Ascending aorta (tissue), 2 donors: ENCODE measurements at regions of chr12 and their contacts with region 1.

Region 1: DNA sequence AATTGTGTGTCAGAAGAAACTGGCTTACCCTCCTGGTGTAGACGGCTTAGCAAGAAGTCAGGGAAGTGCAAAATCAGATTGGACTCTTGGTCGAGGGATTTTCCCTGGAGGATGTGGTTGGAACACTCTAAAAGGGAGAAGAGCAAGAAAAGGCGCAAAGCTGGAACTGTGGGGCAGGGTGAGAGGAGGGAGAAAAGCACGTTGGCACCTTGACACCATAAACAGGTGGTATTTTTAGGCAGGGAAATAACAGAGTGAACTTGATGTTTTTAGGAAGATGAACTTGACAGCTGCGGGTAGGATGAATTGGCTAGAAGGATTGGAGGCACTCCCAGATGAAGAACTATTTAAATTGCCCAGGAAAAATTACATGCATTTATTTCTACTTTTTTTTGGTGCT is 67.7 kb downstream of the HCAR2 start:
- DNase-seq: no peak
- H3K4me3 ChIP-seq: no peak overlapping the region
- H3K27ac ChIP-seq: no peak overlapping the region
- H3K4me1 ChIP-seq: no peaks in the 10 kb centered on the region
- H3K27me3 ChIP-seq: no peaks in the 10 kb centered on the region
- CTCF ChIP-seq: no peak

Region 2: DNA sequence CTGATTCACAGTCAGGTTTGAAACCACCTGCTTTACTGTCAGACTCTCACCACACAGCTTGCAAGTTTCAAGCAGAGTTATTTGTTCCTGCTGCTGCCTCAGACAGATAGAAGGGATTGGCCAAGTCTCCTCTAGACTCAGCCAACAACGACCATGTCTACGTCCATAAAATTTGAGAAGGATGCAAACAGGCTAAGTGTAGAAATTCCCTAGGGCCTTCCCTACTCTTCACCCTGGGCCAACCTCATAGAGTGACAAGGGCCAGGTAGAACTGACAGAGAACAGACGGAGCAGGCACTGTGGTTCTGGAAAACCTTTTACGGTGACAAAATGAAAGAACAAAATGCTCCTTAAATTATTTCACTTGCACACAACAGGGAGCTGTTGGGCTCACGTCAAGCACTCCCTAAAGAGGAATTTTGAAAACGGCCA is 252.5 kb before region 1 on chr12:
- intact Hi-C with region 1: no loop called
- DNase-seq: no peak
- H3K4me3 ChIP-seq: no peak overlapping the region
- H3K27ac ChIP-seq: peak overlapping the region in 1 of 2 donors; percentile 15
- H3K4me1 ChIP-seq: peaks cover 0 to 9% of the 10 kb centered on the region in 2 donors
- H3K27me3 ChIP-seq: no peaks in the 10 kb centered on the region
- CTCF ChIP-seq: no peak

Region 3: GRCh38 chr12:122752464-122753318 is 117.2 kb after region 1 on chr12 and contains the start of gene DENR:
- intact Hi-C with region 1: loop called (anchors 5 kb)
- DNase-seq: peak; percentile 90 to 99
- H3K4me3 ChIP-seq: peak within 1 kb of the TSS; percentile 77 to 80
- H3K27ac ChIP-seq: peak within 1 kb of the TSS; percentile 70 to 75
- H3K4me1 ChIP-seq: peaks cover 3 to 12% of the 10 kb centered on the region in 2 donors
- H3K27me3 ChIP-seq: no peaks in the 10 kb centered on the region
- CTCF ChIP-seq: peak; percentile 63 to 86 (median 72)
- total RNA-seq, gene DENR: 12.2 TPM

Region 4: GRCh38 chr12:122951979-122952892 is 316.8 kb after region 1 on chr12:
- intact Hi-C with region 1: loop called (anchors 10 kb)
- DNase-seq: peak in 1 of 2 donors; percentile 87
- H3K4me3 ChIP-seq: no peak overlapping the region
- H3K27ac ChIP-seq: no peak overlapping the region
- H3K4me1 ChIP-seq: peaks cover 0 to 3% of the 10 kb centered on the region in 2 donors
- H3K27me3 ChIP-seq: no peaks in the 10 kb centered on the region
- CTCF ChIP-seq: peak; percentile 83 to 93 (median 89)